CD14-positive monocyte (primary cell): ENCODE measurements at regions of chr7 and their contacts with region 1.

Region 1: DNA sequence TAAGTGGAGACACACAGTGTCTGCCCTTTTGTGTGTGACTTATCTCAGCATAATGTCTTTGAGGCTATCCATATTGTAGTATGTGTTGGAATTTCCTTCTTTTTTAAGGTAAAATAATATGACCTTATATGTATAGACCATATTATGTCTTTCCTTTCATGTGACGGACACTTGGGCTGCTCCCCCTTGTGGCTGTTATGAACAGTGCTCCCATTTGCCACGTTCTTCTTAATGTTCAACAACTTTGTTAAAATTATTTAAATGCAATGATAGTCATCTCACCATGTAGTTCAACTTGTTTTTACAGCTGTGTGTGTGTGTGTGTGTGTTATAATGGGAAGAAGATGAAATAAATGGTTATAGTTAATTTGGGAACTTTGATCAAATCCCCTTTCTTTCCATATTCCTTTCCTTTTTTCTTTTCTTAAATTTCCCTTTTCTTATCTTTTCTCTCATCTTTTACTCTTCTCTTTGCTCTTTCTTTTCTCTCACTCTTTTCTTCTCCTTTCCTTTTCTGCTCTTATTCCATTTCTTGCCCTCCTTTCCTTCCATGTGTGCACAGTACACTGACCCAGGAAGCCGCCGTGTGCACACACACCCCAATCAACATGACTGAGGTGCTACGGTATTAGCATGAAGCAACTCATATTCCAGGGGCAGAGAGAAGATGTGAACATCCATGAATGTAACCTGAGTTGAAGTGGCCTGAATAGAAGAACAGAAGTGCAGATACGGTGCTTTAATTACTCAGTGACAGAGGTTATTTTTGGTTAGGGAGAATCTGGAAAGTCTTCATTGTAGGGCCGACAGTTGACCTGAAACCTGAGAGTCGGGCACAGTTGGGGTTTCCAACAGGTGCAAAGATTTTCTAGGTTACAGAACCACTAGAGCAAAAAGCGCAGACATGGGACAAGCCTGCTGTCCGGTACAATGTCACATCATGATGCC is 596.7 kb downstream of the SDK1 start:
- DNase-seq: peak; percentile 11 to 38 (median 30)
- H3K4me3 ChIP-seq: no peak overlapping the region
- H3K4me3 Mint-ChIP-seq: no peak overlapping the region
- H3K27ac ChIP-seq: no peak overlapping the region
- H3K27ac Mint-ChIP-seq: no peak overlapping the region
- H3K4me1 ChIP-seq: no peaks in the 10 kb centered on the region
- H3K4me1 Mint-ChIP-seq: no peaks in the 10 kb centered on the region
- H3K27me3 ChIP-seq: no peaks in the 10 kb centered on the region
- H3K27me3 Mint-ChIP-seq: peaks cover 4 to 19% (median 12%) of the 10 kb centered on the region in 3 donors
- CTCF ChIP-seq: peak; percentile 87

Region 2: GRCh38 chr7:2863461-2864066 is 1034.1 kb before region 1 on chr7:
- intact Hi-C with region 1: loop called in 1 of 2 experiments (anchors 2 kb)
- DNase-seq: peak; percentile 96 to 99 (median 98)
- H3K4me3 ChIP-seq: peak overlapping the region in 2 of 3 experiments; percentile 28 to 49
- H3K4me3 Mint-ChIP-seq: peak overlapping the region; percentile 67 to 91
- H3K27ac ChIP-seq: peak overlapping the region; percentile 93 to 99
- H3K27ac Mint-ChIP-seq: peak overlapping the region; percentile 98 to 100 (median 100)
- H3K4me1 ChIP-seq: peaks cover 29% of the 10 kb centered on the region in 2 donors
- H3K4me1 Mint-ChIP-seq: peaks cover 30% of the 10 kb centered on the region
- H3K27me3 ChIP-seq: peaks cover 0 to 10% of the 10 kb centered on the region in 2 donors
- H3K27me3 Mint-ChIP-seq: peaks cover 40 to 55% (median 42%) of the 10 kb centered on the region in 3 donors
- CTCF ChIP-seq: no peak

Region 3: GRCh38 chr7:2886900-2887299 is 1010.8 kb before region 1 on chr7:
- intact Hi-C with region 1: loop called in 1 of 2 experiments (anchors 5 kb)
- DNase-seq: peak; percentile 47 to 72 (median 52)
- H3K4me3 ChIP-seq: no peak overlapping the region
- H3K4me3 Mint-ChIP-seq: no peak overlapping the region
- H3K27ac ChIP-seq: no peak overlapping the region
- H3K27ac Mint-ChIP-seq: peak overlapping the region in 1 of 7 donors; percentile 7
- H3K4me1 ChIP-seq: no peaks in the 10 kb centered on the region
- H3K4me1 Mint-ChIP-seq: peaks cover 4% of the 10 kb centered on the region
- H3K27me3 ChIP-seq: no peaks in the 10 kb centered on the region
- H3K27me3 Mint-ChIP-seq: peaks cover 10 to 22% (median 11%) of the 10 kb centered on the region in 3 donors
- CTCF ChIP-seq: peak; percentile 56